Common myeloid progenitor, CD34-positive (primary cell): ENCODE measurements at regions of chrX and their contacts with region 1.

Region 1: GRCh38 chrX:153649178-153649914 is 2.3 kb downstream of the DUSP9 start:
- DNase-seq: peak; percentile 33 to 54 (median 39)
- H3K4me3 ChIP-seq: no peak overlapping the region
- H3K27ac ChIP-seq: no peak overlapping the region
- H3K4me1 ChIP-seq: peaks cover 0 to 7% (median 0%) of the 10 kb centered on the region in 4 experiments
- H3K27me3 ChIP-seq: peaks cover 0 to 52% (median 21%) of the 10 kb centered on the region in 5 experiments

Region 2: DNA sequence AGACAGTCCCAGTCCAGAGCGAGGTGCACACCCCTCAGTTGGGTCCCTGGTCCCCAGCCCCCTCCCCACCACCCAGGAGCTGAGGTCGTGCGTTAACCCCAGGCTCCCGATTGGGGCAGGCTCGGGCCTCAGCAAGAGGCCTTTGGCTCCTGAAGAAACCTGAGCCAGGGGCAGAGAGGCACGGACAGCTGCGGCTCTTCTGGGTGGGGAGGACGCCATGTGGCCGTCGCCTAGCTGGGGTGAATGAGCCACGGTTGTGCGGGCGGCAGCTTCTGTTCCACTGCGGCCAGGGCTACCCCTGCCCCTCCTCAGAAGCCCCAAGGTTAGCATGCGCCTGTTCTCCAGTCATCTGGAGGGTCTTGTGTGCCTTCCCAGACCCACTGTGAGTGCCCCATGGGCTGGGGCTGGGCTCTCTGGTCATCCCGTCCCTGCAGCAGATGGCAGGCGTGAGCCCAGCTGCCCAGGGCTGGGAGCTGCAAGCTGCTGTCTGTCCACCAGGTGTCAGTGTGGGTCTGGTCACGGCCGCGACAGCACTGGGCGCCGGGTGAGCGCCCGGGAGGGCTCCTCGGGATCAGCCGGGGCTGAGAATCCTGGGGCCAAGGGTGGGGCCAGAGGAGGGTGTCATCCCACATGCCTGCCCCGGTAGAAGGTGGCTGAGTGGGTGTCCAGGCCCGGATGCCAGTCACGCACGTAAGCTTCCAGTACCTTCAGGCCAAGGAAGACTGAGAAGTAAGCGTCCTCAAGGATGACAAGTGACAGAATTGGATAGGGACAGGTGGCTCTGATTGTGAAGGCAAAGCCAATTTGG is 110.0 kb before region 1 on chrX:
- CTCF ChIA-PET with region 1: interaction called, 16 read pairs
- POLR2A ChIA-PET with region 1: no interaction called
- DNase-seq: peak; percentile 27 to 63 (median 59)
- H3K4me3 ChIP-seq: no peak overlapping the region
- H3K27ac ChIP-seq: no peak overlapping the region
- H3K4me1 ChIP-seq: no peaks in the 10 kb centered on the region
- H3K27me3 ChIP-seq: peaks cover 0 to 31% (median 0%) of the 10 kb centered on the region in 5 experiments

Region 3: DNA sequence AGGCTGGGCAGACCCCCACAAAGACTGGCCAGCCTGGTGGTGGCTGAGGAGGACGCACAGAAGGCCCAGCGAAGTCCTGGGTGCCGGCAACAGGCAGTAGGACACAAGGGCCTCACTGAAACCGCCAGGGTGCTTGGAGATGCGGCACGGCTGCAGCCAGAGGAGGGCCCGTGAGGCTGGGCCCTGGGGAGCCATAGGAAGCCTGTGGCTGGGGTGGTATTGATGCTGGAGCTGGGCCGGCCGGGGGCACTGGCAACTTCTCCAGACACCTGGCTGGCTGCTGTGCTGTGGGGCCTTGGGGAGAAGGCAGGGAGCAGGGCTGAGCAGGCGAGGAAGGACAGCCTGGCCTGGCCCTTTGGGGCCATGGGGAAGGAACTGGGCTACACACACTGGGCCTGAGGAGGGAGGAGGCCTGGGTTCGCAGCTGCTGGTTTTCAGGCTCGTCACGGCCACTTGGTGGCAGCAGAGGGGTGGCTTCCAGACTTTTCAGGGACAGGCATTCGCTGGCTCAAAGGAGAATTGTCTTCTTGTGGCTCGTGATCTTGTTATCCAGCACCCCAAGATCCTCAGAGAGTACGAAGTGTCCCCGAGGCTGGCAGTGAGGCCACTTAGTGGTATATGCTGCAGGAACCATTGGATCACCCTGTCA is 94.7 kb before region 1 on chrX:
- CTCF ChIA-PET with region 1: interaction called, 13 read pairs
- POLR2A ChIA-PET with region 1: no interaction called
- DNase-seq: peak; percentile 48 to 76 (median 69)
- H3K4me3 ChIP-seq: no peak overlapping the region
- H3K27ac ChIP-seq: no peak overlapping the region
- H3K4me1 ChIP-seq: peaks cover 0 to 7% (median 2%) of the 10 kb centered on the region in 4 experiments
- H3K27me3 ChIP-seq: peaks cover 0 to 4% (median 0%) of the 10 kb centered on the region in 5 experiments